Caco-2 (cell line): ENCODE measurements at regions of chr13 and their contacts with region 1.

Region 1: DNA sequence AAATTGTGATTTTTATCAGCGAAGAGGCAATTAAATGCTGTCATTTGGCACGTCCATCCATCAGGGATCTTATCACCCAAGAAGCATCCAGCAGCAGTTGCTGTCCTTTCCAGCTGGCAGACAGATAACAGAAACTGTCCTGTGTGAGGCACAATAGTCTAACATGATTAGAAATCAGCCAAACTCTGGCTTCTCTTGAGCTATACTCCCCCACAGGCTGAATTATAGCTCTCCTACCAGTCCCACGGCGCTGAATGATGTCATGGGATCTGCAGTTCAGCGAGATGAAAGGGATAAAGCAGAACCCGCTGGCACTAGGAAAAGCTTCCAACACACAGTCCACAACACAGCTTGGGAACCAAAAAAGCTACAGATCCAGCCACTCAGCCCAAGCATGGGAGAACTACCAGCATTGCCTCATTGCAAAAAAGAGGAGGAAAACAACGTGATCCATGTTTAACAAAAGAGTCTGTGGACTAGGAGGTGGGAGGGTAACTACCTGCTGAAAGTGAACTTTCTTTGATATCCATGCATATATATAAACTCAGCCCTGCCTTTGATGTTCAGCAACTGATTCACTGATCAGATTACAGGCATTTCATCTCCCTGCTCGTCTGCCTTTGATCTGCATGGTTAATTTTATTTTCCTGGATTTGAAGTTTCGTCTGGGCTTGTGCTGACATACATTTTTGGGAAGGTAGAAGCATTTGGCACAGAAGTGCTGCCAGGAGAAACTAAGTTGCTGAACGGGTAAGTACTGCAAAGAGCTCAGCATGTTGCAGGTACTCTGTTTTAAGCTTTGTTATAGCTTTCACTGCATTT is at the start of gene TNFRSF19:
- DNase-seq: peak; percentile 79 to 88
- H3K4me3 ChIP-seq: peak within 1 kb of the TSS; percentile 32
- H3K4me3 Mint-ChIP-seq: peak within 1 kb of the TSS; percentile 88
- H3K27ac Mint-ChIP-seq: peak within 1 kb of the TSS; percentile 87
- H3K4me1 ChIP-seq: peaks cover 31% of the 10 kb centered on the region
- H3K4me1 Mint-ChIP-seq: peaks cover 14% of the 10 kb centered on the region
- H3K27me3 ChIP-seq: no peaks in the 10 kb centered on the region
- H3K27me3 Mint-ChIP-seq: no peaks in the 10 kb centered on the region
- CTCF ChIP-seq: no peak
- total RNA-seq, gene TNFRSF19: 63.4 and 66.4 TPM in 2 replicates

Region 2: DNA sequence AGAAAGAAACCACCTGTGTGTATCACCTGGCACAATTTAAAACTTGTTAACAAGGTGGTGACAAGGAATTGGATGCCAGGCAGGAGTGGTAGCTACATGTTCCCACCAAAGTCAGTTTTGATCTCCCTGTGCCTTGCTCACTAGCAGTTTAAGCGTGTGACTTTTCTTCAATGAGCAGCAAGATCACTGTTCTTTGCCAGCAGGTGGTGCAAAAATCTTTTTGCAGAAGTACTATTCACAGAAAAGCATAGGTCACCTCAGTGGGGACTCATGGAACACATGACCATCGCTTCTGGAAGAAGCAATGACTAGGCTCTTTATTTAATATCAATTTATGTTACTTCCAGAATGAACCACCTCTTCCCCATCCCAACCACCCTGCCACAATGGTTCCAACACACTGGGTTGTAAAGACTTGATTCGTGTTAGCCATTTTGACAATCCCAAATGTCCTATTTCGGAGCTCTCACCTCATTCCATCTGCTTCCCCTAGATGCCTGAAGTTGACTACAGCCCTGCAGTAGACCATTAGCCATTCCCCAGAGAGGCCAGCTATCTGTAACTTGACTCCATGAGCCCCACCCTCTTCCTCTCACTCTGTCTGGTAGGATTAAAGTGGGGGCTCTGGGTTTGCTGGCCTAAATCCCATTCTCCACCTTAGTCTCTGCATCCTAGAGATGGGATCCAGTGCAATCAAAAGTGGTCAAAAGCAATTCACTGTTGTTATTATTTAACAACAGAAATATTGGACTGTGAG is 59.2 kb before region 1 on chr13:
- CTCF ChIA-PET with region 1: interaction called, 7 read pairs
- POLR2A ChIA-PET with region 1: no interaction called
- intact Hi-C with region 1: loop called (anchors 1 kb)
- DNase-seq: peak; percentile 48 to 58
- H3K4me3 ChIP-seq: no peak overlapping the region
- H3K4me3 Mint-ChIP-seq: no peak overlapping the region
- H3K27ac Mint-ChIP-seq: no peak overlapping the region
- H3K4me1 ChIP-seq: peaks cover 13% of the 10 kb centered on the region
- H3K4me1 Mint-ChIP-seq: peaks cover 7% of the 10 kb centered on the region
- H3K27me3 ChIP-seq: no peaks in the 10 kb centered on the region
- H3K27me3 Mint-ChIP-seq: no peaks in the 10 kb centered on the region
- CTCF ChIP-seq: peak; percentile 40 to 62

Region 3: DNA sequence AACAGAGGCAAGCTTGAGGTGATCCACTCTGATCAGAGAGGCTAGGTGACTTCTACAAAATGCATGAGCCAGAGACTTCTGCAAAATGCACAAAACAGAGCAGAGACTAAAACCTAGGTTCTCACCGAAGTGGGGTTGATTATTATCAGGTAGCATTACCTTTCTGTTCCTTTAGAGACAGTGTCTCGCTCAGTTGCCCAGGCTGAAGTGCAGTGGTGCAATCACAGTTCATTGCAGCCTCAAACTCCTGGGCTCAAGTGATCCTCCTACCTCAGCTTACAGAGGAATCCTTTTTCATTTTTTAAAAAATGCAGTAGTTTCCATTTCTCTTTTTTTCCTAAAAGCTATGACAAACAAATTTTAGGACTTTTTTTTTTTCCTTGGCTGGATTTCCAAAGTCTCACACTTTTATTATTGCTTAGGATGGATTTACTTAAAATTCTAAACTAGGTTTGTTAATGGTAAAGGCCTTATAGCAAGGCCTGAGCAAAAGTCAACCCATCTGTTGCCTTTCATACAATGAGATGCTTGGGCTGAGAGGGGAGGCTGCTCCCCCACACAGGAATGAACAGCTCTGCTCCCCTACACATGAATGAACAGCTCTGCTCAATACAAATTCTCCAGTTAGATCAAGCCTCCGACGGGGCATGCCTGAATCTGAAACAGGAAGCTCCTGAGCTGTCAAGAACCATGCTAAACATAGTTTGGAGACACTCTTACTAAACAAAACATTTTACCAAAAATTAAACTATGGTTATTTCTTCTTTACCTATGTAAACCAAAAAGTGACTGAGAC is 18.9 kb before region 1 on chr13:
- CTCF ChIA-PET with region 1: interaction called, 8 read pairs
- POLR2A ChIA-PET with region 1: no interaction called
- intact Hi-C with region 1: loop called (anchors 2 kb)
- DNase-seq: no peak
- H3K4me3 ChIP-seq: no peak overlapping the region
- H3K4me3 Mint-ChIP-seq: no peak overlapping the region
- H3K27ac Mint-ChIP-seq: peak overlapping the region; percentile 2
- H3K4me1 ChIP-seq: peaks cover 35% of the 10 kb centered on the region
- H3K4me1 Mint-ChIP-seq: peaks cover 23% of the 10 kb centered on the region
- H3K27me3 ChIP-seq: no peaks in the 10 kb centered on the region
- H3K27me3 Mint-ChIP-seq: no peaks in the 10 kb centered on the region
- CTCF ChIP-seq: no peak

Region 4: GRCh38 chr13:23637829-23638228 is 67.5 kb after region 1 on chr13:
- CTCF ChIA-PET with region 1: no interaction called
- POLR2A ChIA-PET with region 1: no interaction called
- intact Hi-C with region 1: no loop called
- DNase-seq: no peak
- H3K4me3 ChIP-seq: no peak overlapping the region
- H3K4me3 Mint-ChIP-seq: no peak overlapping the region
- H3K27ac Mint-ChIP-seq: no peak overlapping the region
- H3K4me1 ChIP-seq: peaks cover 20% of the 10 kb centered on the region
- H3K4me1 Mint-ChIP-seq: peaks cover 9% of the 10 kb centered on the region
- H3K27me3 ChIP-seq: no peaks in the 10 kb centered on the region
- H3K27me3 Mint-ChIP-seq: no peaks in the 10 kb centered on the region
- CTCF ChIP-seq: no peak

Region 5: GRCh38 chr13:23888658-23889614 is 318.6 kb after region 1 on chr13 and contains the start of gene MIPEP:
- CTCF ChIA-PET with region 1: interaction called, 11 read pairs
- POLR2A ChIA-PET with region 1: no interaction called
- intact Hi-C with region 1: loop called (anchors 5 kb)
- DNase-seq: peak; percentile 94 to 96
- H3K4me3 ChIP-seq: peak within 1 kb of the TSS; percentile 90
- H3K4me3 Mint-ChIP-seq: peak within 1 kb of the TSS; percentile 97
- H3K27ac Mint-ChIP-seq: peak within 1 kb of the TSS; percentile 88
- H3K4me1 ChIP-seq: 0 out of 2 replicates have a peak, but pooled peaks cover 9% of the 10 kb centered on the region
- H3K4me1 Mint-ChIP-seq: peaks cover 7% of the 10 kb centered on the region
- H3K27me3 ChIP-seq: no peaks in the 10 kb centered on the region
- H3K27me3 Mint-ChIP-seq: no peaks in the 10 kb centered on the region
- CTCF ChIP-seq: peak; percentile 71 to 87
- total RNA-seq, gene MIPEP: 40.6 and 40.8 TPM in 2 replicates